ENCODE measurements at regions of chr9 and their contacts with region 1.

Region 1: DNA sequence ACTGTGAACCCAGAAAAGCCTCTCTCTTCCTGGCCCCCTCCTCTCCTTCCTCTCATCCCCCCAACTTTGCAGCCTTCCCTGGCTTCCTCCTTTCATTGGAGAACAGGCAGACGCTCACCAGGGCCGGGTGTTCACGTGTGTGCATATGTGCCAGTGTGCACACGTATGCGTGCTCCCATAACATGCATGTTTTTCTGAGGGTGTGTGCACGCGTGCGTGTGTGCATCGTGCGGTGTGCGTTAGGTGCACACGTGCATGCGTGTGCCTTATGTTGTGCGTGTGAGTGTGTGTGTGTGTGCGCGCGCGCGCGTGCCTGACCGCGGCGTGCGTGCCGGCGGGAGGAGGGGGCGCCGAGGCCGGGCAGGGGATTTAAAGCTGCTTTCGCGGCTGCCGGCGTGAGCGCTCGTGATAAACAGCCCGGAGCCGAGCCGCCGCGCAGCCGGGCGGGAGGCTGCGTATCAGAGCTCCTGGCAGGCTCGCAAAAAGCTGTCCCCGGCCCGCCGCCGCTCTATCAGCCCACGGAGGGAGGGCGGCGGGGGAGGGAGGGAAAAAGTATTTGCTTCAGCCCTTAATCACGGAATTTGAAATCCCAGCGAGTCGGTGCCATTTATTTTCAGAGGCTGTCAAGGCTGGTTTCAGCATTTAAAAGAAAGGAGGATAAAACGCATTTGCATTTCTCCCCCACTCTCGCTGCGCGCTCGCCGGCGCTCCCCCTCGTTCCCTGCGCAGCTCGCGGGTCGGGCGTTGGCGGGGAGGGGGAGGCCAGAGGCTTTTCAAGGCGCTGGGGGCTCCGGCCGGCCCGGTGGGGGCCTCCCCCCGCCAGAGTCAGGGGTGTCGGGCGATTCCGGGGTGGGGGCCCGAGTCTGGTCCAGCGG is 183.9 kb downstream of the C9orf50 start:
- DNase-seq: no peak
- H3K4me3 ChIP-seq: peak overlapping the region; percentile 23 to 57 (median 38)
- H3K27ac ChIP-seq: no peak overlapping the region
- H3K4me1 ChIP-seq: peaks cover 5 to 22% (median 17%) of the 10 kb centered on the region in 4 experiments
- H3K27me3 ChIP-seq: peaks cover 28 to 60% (median 55%) of the 10 kb centered on the region in 4 experiments
- CTCF ChIP-seq: no peak
- EP300 ChIP-seq: no peak
- POLR2A ChIP-seq: no peak
- RAD21 ChIP-seq: no peak

Region 2: DNA sequence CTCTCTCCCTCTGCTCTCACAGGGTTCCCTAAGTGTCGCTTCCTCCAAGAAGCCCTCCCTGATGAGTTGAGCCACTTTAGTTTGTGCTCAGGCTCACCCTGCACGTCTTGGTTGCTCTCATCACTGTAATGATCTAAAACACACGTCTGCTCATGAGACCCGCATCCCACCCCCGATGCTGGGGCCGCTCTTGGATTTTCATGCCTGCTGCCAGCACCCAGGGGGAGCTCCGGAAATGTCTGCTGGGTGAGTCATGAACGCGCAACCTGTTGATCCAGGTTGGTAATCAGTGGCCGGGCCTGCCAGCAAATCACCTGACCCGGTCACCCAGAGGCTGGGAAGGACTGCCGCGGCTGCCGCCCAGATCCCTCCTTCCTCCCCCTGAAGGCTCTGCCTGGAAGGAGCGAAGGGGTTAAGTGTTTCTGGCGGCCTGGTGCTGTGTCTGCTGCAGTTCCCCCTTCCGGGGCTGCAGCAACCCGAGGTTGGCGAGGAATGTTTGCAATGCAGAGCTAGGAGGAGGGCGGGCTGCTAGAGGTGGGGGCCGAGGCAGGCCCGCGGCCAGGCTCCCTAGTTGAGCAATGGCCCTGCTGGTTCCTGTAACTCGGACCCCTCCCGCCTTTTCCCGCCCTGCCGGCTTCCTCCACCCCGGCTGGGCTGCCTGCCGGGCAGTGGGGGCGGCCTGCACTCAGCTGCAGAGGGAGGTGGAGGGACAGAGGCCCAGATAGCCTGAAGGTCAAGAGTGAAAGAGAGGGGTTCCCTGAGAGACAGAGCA is 102.8 kb before region 1 on chr9:
- CTCF ChIA-PET with region 1: no interaction called
- POLR2A ChIA-PET with region 1: no interaction called
- DNase-seq: peak; percentile 87 to 94
- H3K4me3 ChIP-seq: peak overlapping the region in 3 of 4 experiments; percentile 23 to 49 (median 40); a peak in 6 of 8 replicates
- H3K27ac ChIP-seq: peak overlapping the region; percentile 92
- H3K4me1 ChIP-seq: peaks cover 8 to 40% (median 34%) of the 10 kb centered on the region in 4 experiments
- H3K27me3 ChIP-seq: 0 out of 7 replicates have a peak, but pooled peaks cover 0 to 2% (median 0%) of the 10 kb centered on the region in 4 experiments
- CTCF ChIP-seq: peak in 1 of 3 experiments; percentile 7; a peak in 1 of 4 replicates
- EP300 ChIP-seq: peak in 1 of 2 experiments; percentile 92; a peak in 1 of 3 replicates
- POLR2A ChIP-seq: peak in 1 of 2 experiments; percentile 43; a peak in 1 of 3 replicates
- RAD21 ChIP-seq: peak in 1 of 2 experiments; percentile 35; a peak in 2 of 4 replicates

Region 3: DNA sequence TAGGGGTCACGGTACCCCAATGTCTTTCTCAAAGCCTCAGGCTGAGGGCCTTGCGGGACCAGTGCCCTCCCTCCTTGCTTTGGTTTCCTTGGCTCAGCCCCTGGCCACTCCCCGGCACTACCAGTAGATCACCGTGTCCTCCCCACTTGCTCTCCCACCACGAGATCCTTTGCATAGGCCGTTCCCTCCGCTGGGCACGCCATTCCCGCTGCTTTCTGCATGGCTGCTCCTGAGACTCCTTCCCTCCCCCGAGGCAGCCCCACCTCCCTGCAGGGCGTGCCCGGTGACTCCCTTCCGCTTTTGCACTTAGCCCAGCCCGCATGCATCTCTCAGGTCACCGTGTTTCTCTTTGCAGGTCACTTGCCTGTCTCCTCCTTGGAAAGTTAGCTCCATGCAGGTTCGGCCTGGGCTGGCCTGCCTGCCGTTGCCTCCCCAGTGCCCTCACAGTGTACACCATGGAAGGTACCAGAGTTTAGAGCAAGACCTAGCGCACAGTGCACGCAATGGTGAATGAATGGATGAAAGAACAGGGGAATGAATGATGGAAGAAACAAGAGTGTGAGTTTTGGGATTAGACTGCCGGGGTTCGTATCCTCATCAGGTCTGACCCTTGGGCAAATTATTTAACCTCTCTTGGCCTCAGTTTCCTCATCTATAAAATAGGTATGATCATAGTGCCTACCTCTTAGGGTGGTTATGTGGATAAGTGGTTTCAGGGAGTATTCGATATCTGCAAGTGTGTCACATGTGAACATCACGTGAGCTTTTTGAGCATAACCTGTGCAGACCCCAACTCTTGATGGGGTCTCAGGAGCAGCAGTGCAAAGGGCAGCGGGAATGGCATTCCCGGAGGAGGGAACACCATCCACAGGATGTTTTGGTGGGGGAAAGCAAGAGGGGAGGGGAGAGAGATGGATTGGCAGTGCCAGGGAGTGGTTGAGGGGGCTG is 30.4 kb before region 1 on chr9:
- CTCF ChIA-PET with region 1: no interaction called
- POLR2A ChIA-PET with region 1: no interaction called
- DNase-seq: peak in 1 of 2 experiments; percentile 45
- H3K4me3 ChIP-seq: no peak overlapping the region
- H3K27ac ChIP-seq: no peak overlapping the region
- H3K4me1 ChIP-seq: peaks cover 4 to 37% (median 17%) of the 10 kb centered on the region in 4 experiments
- H3K27me3 ChIP-seq: no peaks in the 10 kb centered on the region; a peak in 3 of 7 replicates
- CTCF ChIP-seq: no peak
- EP300 ChIP-seq: no peak
- POLR2A ChIP-seq: no peak
- RAD21 ChIP-seq: no peak

Region 4: GRCh38 chr9:129422843-129423192 is 14.2 kb before region 1 on chr9:
- CTCF ChIA-PET with region 1: interaction called, 10 read pairs
- POLR2A ChIA-PET with region 1: interaction called, 3 read pairs
- DNase-seq: no peak
- H3K4me3 ChIP-seq: no peak overlapping the region
- H3K27ac ChIP-seq: no peak overlapping the region
- H3K4me1 ChIP-seq: peaks cover 0 to 2% (median 0%) of the 10 kb centered on the region in 4 experiments; a peak in 2 of 7 replicates
- H3K27me3 ChIP-seq: peaks cover 0 to 2% (median 0%) of the 10 kb centered on the region in 4 experiments; a peak in 3 of 7 replicates
- CTCF ChIP-seq: no peak
- EP300 ChIP-seq: no peak
- POLR2A ChIP-seq: no peak
- RAD21 ChIP-seq: no peak

Measured in H1 (cell line).